Mammary epithelial cell (primary cell): ENCODE measurements at regions of chr19 and their contacts with region 1.

Region 1: GRCh38 chr19:3429581-3430080 is 50.7 kb downstream of the SMIM24 start:
- DNase-seq: peak; percentile 48
- H3K4me3 ChIP-seq: no peak overlapping the region
- H3K27ac ChIP-seq: peak overlapping the region; percentile 38
- H3K4me1 ChIP-seq: peaks cover 11% of the 10 kb centered on the region
- H3K27me3 ChIP-seq: no peaks in the 10 kb centered on the region
- CTCF ChIP-seq: peak; percentile 82 to 94

Region 2: DNA sequence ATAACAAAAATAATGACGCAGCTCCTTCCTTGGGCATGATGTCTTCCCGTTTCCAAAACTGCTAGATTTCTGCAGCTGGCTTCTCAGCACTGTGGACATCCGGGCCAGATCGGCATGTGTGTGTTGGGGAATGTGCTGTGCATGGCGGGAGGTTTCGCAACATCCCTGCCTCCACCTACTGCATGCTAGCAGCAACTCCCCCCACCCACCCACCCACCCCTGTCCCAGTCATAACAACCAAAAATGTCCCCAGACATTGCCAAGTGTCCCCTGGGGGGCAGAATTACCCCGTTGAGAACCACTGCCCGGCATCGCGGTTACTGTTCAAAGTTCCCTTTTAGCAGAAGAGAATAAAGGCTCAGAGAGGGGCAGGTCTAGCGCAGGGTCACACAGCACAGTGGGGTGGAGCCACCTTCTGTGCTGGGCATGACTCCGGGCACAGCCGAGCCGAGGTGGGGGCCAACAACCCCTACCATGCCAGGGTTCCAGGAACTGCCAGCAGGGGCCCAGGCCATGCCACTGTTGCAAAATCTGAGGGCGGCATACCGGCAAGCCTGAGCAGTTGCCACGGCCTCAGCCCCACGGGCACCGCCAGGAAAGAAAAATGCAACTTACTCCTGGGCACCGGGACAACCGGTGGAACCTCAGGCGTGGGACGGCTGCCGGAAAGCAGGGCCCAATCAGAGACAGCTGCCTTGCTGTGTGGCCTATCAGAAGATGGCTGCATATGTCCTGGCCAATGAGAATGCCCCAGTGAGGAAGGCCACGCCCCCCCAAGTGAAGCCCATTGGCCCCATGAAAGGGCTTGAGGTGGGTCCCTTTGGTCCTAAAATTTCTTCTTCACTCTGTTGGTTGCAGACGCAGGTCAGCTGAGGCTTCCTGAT is 85.8 kb before region 1 on chr19:
- CTCF ChIA-PET with region 1: no interaction called
- dilution Hi-C with region 1: no loop called
- in situ Hi-C with region 1: no loop called
- intact Hi-C with region 1: loop called (anchors 1 kb)
- DNase-seq: peak; percentile 81
- H3K4me3 ChIP-seq: peak overlapping the region in 2 of 3 experiments; percentile 26 to 43
- H3K27ac ChIP-seq: no peak overlapping the region
- H3K4me1 ChIP-seq: peaks cover 16% of the 10 kb centered on the region
- H3K27me3 ChIP-seq: no peaks in the 10 kb centered on the region
- CTCF ChIP-seq: peak in 1 of 2 donors; percentile 30

Region 3: GRCh38 chr19:3505598-3506383 is 76.2 kb after region 1 on chr19 and contains the start of gene FZR1:
- CTCF ChIA-PET with region 1: no interaction called
- dilution Hi-C with region 1: no loop called
- in situ Hi-C with region 1: no loop called
- intact Hi-C with region 1: no loop called
- DNase-seq: peak; percentile 98
- H3K4me3 ChIP-seq: peak within 1 kb of the TSS; percentile 84 to 86 (median 85)
- H3K27ac ChIP-seq: peak within 1 kb of the TSS; percentile 96
- H3K4me1 ChIP-seq: peaks cover 30% of the 10 kb centered on the region
- H3K27me3 ChIP-seq: no peaks in the 10 kb centered on the region
- CTCF ChIP-seq: no peak
- total RNA-seq, gene FZR1: 49.8 to 55.0 TPM